ENCODE measurements at regions of chr7 and their contacts with region 1.

Region 1: DNA sequence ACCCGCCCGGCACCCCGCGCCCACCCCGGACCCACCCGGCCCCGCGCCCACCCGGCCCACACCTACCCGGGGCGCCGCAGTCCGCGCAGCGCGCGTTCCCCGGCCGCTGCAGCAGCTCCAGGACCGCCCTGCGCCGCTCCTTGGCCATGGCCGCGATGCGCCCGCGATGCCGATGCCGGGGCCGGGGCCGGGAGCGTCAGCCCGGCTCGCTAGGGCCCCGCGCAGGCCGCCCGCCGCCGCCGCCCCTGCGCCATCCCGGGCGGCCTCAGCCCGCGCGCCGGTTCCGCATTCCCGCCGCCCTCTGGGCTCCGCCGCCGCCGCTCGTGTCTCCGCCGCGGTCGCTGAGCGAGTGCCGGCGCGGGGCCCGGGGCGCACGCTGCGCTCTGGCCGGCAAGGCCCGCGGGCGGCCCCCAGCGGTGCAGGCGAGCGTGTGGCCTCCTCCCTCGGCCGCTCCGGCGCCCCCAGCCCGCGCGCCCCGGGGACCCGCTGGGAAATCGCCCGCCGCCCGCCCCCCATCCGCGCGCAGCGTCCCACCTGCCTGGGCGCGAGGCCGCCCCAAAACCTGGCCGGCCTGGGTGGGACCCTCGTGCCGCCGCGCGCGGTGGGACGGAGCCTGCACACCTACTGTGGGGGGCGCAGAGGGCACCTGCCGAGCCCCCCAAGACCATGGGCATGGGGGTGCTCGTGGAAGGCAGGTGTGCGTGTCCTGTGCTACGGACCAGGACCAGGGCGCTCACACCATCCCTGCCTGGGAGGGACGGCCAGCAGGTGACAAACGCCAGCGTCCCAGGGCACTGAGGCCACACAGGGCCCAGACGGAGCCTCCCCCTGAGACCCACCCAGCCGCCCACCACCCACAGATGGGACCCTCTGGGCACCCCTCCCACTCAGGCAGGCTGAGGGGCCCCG is at the start of gene ADAP1:
- DNase-seq: peak; percentile 48
- H3K4me3 Mint-ChIP-seq: peak within 1 kb of the TSS; percentile 71
- H3K27ac Mint-ChIP-seq: peak within 1 kb of the TSS; percentile 28
- H3K4me1 Mint-ChIP-seq: peaks cover 2% of the 10 kb centered on the region
- H3K27me3 Mint-ChIP-seq: peaks cover 8% of the 10 kb centered on the region
- total RNA-seq, gene ADAP1: 62.8 and 65.2 TPM in 2 replicates

Region 2: GRCh38 chr7:786472-787255 is 167.9 kb before region 1 on chr7:
- intact Hi-C with region 1: loop called (anchors 2 kb)
- DNase-seq: peak; percentile 42
- H3K4me3 Mint-ChIP-seq: no peak overlapping the region
- H3K27ac Mint-ChIP-seq: no peak overlapping the region
- H3K4me1 Mint-ChIP-seq: no peaks in the 10 kb centered on the region
- H3K27me3 Mint-ChIP-seq: no peaks in the 10 kb centered on the region

Region 3: DNA sequence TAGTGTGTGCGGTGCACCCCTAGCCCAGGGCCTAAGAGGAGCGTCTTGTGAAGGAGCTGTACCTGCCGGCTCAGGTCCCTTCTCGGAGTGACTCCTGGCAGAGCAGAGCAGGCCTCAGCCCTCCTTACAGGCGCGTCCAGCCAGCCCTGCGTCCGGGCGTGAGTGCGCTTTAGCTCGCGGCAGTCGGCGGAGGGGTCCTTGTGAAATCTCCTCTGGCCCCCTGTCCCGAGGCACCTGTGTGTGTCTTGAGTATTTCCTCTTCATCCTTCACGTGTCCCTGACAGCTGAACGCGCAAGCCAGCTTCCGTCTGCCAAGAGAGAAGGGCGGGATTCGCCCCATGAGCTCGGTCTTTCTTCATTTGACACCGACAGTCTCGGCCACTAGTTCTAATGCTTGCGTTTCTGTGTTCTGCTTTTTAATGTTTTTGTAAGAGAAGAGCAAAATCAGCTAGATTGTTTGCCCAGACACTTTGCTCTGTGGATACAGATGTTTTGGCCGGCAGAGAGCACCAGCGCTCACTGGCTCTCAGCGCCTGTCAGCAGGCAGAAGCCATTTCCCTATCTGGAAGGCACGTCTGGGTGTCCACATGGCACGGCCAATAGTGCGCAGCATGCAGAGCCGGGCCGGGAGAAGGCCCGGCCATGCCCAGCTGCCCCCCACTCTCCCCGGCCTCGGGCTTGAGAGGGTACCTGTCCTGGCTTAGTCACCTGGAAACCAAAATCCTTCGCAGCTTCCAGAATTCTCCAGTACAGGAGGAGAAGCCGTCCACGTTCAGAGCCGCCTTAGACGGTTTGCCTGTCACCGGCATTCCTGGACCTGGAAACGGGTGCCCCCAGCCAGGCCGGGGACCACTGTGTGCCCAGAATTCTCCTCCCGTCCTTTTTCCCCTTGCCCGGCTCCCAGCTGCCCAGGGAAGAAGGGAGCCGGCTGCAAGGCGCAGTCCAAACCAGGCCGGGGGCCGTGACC is 71.2 kb before region 1 on chr7:
- intact Hi-C with region 1: no loop called
- DNase-seq: no peak
- H3K4me3 Mint-ChIP-seq: no peak overlapping the region
- H3K27ac Mint-ChIP-seq: no peak overlapping the region
- H3K4me1 Mint-ChIP-seq: peaks cover 3% of the 10 kb centered on the region
- H3K27me3 Mint-ChIP-seq: no peaks in the 10 kb centered on the region

Region 4: DNA sequence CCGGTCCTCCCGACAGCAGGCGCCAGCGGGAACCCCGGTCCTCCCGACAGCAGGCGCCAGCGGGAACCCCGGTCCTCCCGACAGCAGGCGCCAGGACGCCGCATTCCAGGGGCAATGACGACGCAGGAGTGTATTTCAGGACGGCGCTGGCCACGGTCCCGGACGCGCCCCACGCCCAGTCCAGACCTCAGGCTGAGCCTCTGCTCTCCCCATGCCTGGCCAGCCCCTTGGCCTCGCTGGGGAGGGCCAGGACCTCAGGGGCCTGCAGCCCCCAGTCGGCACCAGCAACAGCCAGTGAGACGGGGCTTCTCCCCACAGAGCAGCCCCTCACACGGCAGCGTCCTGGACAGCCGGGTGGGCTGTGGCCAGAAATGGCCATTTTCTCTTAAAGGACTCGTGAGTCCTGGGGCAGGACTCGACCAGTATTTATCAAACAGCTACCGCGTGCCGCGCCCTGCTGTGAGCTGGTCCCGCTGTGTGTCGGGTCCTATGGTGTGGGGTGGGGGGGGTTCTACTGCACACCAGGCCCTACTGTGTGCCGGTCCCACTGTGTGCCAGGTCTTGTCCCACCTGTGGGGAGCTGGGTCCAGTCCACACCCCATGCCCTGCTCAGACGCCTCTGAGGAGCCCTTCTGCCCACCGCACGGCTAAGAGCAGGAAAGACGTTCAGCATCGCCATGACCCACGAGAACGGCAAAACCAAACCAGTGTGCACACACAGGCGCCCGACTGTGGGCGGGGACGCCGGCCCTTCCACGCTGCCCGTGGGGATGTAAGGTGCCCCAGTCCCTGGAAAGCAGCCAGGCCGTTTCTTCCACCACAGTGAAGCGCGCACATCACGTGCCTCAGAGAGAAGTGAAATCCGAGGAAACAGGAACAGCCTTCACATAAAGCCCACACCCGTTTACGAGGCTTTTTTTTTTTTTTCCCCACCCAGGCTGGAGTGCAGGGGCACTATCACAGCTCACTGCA is 44.9 kb before region 1 on chr7:
- intact Hi-C with region 1: loop called (anchors 1 kb)
- DNase-seq: no peak
- H3K4me3 Mint-ChIP-seq: no peak overlapping the region
- H3K27ac Mint-ChIP-seq: no peak overlapping the region
- H3K4me1 Mint-ChIP-seq: peaks cover 5% of the 10 kb centered on the region
- H3K27me3 Mint-ChIP-seq: no peaks in the 10 kb centered on the region

Region 5: GRCh38 chr7:923108-924041 is 31.2 kb before region 1 on chr7:
- intact Hi-C with region 1: loop called (anchors 5 kb)
- DNase-seq: peak; percentile 92
- H3K4me3 Mint-ChIP-seq: peak overlapping the region; percentile 79
- H3K27ac Mint-ChIP-seq: peak overlapping the region; percentile 94
- H3K4me1 Mint-ChIP-seq: peaks cover 23% of the 10 kb centered on the region
- H3K27me3 Mint-ChIP-seq: no peaks in the 10 kb centered on the region

Measured in activated T-helper 2 cell treated with anti-CD3 and anti-CD28 coated beads, Interferon-gamma antibody, Interleukin-2, Interleukin-4, amounts not matched to agents 10 μg/mL and 5 μg/mL and 100 μg/mL, durations not matched to agents 14 hours and 24 hours and 36 hours (primary cell).